OCI-LY7 (cell line): ENCODE measurements at regions of chr3 and their contacts with region 1.

Region 1: DNA sequence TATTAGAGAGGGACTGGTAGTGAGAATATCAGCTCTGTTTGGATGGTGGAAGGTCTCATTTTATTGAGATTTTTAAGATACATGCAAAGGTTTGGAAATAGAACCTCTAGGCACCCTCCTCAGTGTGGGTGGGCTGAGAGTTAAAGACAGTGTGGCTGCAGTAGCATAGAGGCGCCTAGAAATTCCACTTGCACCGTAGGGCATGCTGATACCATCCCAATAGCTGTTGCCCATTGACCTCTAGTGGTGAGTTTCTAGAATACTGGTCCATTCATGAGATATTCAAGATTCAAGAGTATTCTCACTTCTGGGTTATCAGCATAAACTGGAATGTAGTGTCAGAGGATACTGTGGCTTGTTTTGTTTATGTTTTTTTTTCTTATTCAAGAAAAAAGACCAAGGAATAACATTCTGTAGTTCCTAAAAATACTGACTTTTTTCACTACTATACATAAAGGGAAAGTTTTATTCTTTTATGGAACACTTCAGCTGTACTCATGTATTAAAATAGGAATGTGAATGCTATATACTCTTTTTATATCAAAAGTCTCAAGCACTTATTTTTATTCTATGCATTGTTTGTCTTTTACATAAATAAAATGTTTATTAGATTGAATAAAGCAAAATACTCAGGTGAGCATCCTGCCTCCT is 87.2 kb downstream of the TGFBR2 start:
- DNase-seq: peak; percentile 83
- H3K4me3 ChIP-seq: no peak overlapping the region
- H3K27ac ChIP-seq: no peak overlapping the region
- H3K4me1 ChIP-seq: peaks cover 7% of the 10 kb centered on the region
- CTCF ChIP-seq: peak; percentile 95

Region 2: DNA sequence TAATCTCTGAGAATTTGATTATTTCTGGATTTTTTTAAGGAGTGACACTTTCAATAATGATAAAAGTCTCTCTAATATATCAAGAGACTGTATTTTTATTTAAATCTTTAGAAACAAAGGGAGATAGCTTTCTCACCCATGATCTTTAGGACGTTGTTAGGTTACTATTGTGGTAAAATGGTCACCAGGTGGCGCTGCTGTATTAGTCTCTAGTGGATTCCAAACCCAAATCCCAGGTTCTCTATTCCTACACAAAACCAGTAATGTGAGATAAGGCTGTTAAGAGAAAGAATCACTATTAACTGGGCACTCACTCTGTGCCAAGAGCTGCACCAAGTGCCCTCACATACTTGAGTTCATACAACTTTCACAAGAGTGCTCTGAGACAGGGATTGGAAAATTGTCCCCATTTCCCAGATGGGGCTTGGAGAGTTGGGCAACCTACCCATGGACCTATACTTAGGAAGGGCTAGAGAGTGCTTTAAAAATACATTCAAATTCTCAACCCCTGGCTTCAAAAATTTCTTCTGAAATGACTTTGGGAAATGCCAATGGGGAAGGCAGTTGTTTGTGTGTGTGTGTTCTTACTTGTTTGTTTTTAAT is 680.6 kb before region 1 on chr3:
- CTCF ChIA-PET with region 1: no interaction called
- POLR2A ChIA-PET with region 1: no interaction called
- intact Hi-C with region 1: loop called (anchors 5 kb)
- DNase-seq: peak; percentile 55
- H3K4me3 ChIP-seq: no peak overlapping the region
- H3K27ac ChIP-seq: no peak overlapping the region
- H3K4me1 ChIP-seq: no peaks in the 10 kb centered on the region
- CTCF ChIP-seq: peak; percentile 92

Region 3: DNA sequence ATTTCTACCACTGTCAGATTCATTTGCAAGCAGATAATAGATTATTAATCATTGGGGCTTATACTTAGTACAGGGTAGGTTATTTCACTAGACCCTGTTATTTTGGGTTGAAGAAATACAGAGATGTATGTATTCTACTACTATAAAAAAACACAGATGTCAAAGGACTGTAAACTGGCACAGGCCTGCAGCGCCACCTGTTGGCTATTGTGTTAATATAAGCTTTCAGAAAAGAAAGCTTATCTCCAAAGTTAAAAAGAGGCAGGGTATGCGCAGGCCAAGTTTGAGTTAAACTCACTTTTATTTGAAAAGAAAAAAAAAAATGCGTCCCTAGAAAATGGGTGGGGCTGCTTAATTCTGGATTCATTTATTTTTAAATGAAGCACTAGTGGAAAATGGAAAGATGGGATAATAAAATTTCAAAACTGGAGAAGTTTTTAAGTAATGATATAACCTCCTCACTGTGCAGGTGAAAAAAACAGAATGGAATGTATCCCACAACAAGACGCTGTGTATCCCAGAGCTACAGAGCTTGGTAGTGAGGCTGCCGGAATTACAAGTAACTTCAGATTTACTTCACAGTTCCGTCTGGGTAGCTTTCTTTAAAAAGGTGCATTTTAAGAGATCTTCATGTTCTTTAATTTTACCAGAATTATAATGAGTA is 494.4 kb before region 1 on chr3:
- CTCF ChIA-PET with region 1: no interaction called
- POLR2A ChIA-PET with region 1: interaction called, 4 read pairs
- intact Hi-C with region 1: loop called (anchors 1 kb)
- DNase-seq: peak; percentile 64
- H3K4me3 ChIP-seq: no peak overlapping the region
- H3K27ac ChIP-seq: no peak overlapping the region
- H3K4me1 ChIP-seq: no peaks in the 10 kb centered on the region
- CTCF ChIP-seq: peak; percentile 98

Region 4: DNA sequence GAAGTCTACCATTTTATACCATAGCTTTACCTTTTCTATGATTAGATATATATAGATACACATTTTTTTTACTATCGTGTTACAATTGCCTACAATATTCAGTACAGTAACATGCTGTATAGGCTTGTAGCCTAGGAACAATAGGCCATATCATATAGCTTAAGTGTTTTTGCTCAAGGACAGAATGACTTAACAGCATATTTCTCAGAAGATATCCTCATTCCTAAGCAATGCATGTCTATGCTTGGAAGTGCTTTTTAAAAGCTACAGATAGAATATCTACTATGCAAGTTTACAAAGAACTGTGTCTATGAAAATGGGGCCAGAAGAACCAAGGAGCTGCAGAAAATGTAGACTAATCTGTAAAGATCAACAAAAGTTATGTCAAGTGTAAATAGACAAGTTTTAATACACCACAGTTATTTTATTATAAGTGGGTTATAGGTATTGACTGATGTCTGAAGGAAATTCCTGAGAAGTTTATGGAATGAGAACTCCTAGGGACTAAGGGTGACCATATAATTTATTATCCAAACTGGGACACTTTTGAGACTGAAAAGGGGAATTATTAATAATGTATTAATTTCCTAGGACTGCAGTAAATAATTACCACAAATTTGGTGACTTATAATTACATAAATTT is 225.9 kb before region 1 on chr3:
- CTCF ChIA-PET with region 1: no interaction called
- POLR2A ChIA-PET with region 1: no interaction called
- intact Hi-C with region 1: loop called (anchors 10 kb)
- DNase-seq: no peak
- H3K4me3 ChIP-seq: no peak overlapping the region
- H3K27ac ChIP-seq: no peak overlapping the region
- H3K4me1 ChIP-seq: no peaks in the 10 kb centered on the region
- CTCF ChIP-seq: no peak

Region 5: DNA sequence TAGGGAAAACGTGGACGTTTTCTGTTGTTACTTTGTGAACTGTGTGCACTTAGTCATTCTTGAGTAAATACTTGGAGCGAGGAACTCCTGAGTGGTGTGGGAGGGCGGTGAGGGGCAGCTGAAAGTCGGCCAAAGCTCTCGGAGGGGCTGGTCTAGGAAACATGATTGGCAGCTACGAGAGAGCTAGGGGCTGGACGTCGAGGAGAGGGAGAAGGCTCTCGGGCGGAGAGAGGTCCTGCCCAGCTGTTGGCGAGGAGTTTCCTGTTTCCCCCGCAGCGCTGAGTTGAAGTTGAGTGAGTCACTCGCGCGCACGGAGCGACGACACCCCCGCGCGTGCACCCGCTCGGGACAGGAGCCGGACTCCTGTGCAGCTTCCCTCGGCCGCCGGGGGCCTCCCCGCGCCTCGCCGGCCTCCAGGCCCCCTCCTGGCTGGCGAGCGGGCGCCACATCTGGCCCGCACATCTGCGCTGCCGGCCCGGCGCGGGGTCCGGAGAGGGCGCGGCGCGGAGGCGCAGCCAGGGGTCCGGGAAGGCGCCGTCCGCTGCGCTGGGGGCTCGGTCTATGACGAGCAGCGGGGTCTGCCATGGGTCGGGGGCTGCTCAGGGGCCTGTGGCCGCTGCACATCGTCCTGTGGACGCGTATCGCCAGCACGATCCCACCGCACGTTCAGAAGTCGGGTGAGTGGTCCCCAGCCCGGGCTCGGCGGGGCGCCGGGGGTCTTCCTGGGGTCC is 87.1 kb before region 1 on chr3 and contains the start of gene TGFBR2:
- CTCF ChIA-PET with region 1: no interaction called
- POLR2A ChIA-PET with region 1: interaction called, 3 read pairs
- intact Hi-C with region 1: loop called (anchors 2 kb)
- DNase-seq: peak; percentile 91
- H3K4me3 ChIP-seq: peak within 1 kb of the TSS; percentile 94
- H3K27ac ChIP-seq: peak within 1 kb of the TSS; percentile 93
- H3K4me1 ChIP-seq: peaks cover 72% of the 10 kb centered on the region
- CTCF ChIP-seq: no peak; the same call in 1 of the 2 replicates
- total RNA-seq, gene TGFBR2: 28.1 and 29.6 TPM in 2 replicates

Region 6: GRCh38 chr3:30620402-30621360 is 72.9 kb before region 1 on chr3:
- CTCF ChIA-PET with region 1: no interaction called
- POLR2A ChIA-PET with region 1: no interaction called
- intact Hi-C with region 1: no loop called
- DNase-seq: no peak
- H3K4me3 ChIP-seq: no peak overlapping the region
- H3K27ac ChIP-seq: peak overlapping the region; percentile 25
- H3K4me1 ChIP-seq: peaks cover 98% of the 10 kb centered on the region
- CTCF ChIP-seq: no peak

Region 7: GRCh38 chr3:30644593-30645012 is 49.0 kb before region 1 on chr3:
- CTCF ChIA-PET with region 1: no interaction called
- POLR2A ChIA-PET with region 1: interaction called, 4 read pairs
- intact Hi-C with region 1: loop called (anchors 2 kb)
- DNase-seq: peak; percentile 82
- H3K4me3 ChIP-seq: peak overlapping the region; percentile 45
- H3K27ac ChIP-seq: peak overlapping the region; percentile 94
- H3K4me1 ChIP-seq: peaks cover 99% of the 10 kb centered on the region
- CTCF ChIP-seq: no peak

Region 8: GRCh38 chr3:30915782-30916181 is 222.2 kb after region 1 on chr3:
- CTCF ChIA-PET with region 1: no interaction called
- POLR2A ChIA-PET with region 1: no interaction called
- intact Hi-C with region 1: no loop called
- DNase-seq: no peak
- H3K4me3 ChIP-seq: no peak overlapping the region
- H3K27ac ChIP-seq: no peak overlapping the region
- H3K4me1 ChIP-seq: no peaks in the 10 kb centered on the region
- CTCF ChIP-seq: no peak

Region 9: GRCh38 chr3:31288641-31289100 is 595.1 kb after region 1 on chr3:
- CTCF ChIA-PET with region 1: no interaction called
- POLR2A ChIA-PET with region 1: no interaction called
- intact Hi-C with region 1: no loop called
- DNase-seq: no peak
- H3K4me3 ChIP-seq: no peak overlapping the region
- H3K27ac ChIP-seq: no peak overlapping the region
- H3K4me1 ChIP-seq: peaks cover 2% of the 10 kb centered on the region
- CTCF ChIP-seq: no peak